ENCODE measurements at regions of chrX and their contacts with region 1.

Region 1: DNA sequence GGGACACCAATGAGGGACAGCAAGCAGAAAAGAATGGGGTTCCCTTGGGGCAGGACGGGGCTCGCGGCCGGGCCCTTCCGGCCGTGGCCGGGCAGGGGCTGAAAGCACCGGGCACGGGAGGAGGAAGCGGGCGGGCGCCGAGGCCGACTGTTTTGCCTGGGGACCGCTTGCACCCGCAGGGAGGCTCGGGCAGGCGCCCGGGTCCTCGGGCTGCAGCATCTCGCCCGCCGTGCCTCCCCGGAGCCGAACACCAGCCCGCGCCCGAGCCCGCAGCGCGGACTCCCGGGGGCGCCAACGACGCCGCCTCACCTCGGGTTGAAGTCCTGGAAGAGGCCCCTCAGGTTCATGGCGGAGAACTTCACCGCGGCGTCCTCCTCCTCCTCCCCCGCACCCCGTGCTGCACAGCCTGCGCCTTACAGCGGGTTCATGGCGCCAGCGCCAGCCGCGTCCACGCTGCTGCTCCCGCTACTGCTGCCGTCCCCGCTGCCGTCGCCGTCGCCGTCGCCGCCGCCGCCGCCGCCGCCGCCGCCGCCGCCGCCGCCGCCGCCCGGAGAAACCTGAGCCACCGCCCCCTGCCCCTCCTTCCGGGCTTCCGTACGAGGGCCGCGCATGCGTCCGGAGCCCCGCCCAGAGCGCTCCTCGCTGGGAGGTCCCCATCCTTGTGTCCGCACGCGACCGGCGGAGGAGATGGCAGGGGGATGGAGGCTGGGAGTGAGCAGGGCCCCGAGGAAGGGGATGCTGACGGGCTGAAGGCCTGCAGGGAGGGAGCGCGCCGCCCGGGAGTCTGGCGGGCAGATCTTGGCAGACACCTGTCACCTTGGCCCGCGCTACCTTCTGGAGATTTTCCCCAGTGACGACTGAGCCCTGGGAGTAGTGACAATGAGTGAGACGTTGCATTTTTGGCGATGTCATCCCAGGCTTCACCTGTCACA is at the start of gene TMEM185A:
- DNase-seq: peak; percentile 48 to 79 (median 71)
- ATAC-seq: peak; percentile 92
- H3K4me3 ChIP-seq: peak within 1 kb of the TSS; percentile 68
- H3K4me3 Mint-ChIP-seq: peak within 1 kb of the TSS; percentile 84 to 98 (median 92)
- H3K27ac ChIP-seq: peak within 1 kb of the TSS; percentile 72
- H3K27ac Mint-ChIP-seq: peak within 1 kb of the TSS; percentile 78 to 94 (median 83)
- H3K4me1 ChIP-seq: peaks cover 12% of the 10 kb centered on the region in 2 donors
- H3K4me1 Mint-ChIP-seq: peaks cover 29 to 43% (median 39%) of the 10 kb centered on the region in 7 donors
- H3K27me3 ChIP-seq: no peaks in the 10 kb centered on the region
- H3K27me3 Mint-ChIP-seq: peaks cover 0 to 9% (median 0%) of the 10 kb centered on the region in 5 donors
- total RNA-seq, gene TMEM185A: 11.9 to 23.4 (median 19.9) TPM

Region 2: GRCh38 chrX:147911192-147912022 is 1720.1 kb before region 1 on chrX and contains the start of gene FMR1:
- CTCF ChIA-PET with region 1: no interaction called
- POLR2A ChIA-PET with region 1: no interaction called
- intact Hi-C with region 1: loop called in 1 of 2 experiments (anchors 10 kb)
- DNase-seq: peak; percentile 83 to 95 (median 93)
- ATAC-seq: peak; percentile 96
- H3K4me3 ChIP-seq: peak within 1 kb of the TSS; percentile 71
- H3K4me3 Mint-ChIP-seq: peak within 1 kb of the TSS; percentile 87 to 98 (median 96)
- H3K27ac ChIP-seq: peak within 1 kb of the TSS; percentile 93
- H3K27ac Mint-ChIP-seq: peak within 1 kb of the TSS; percentile 87 to 97 (median 94)
- H3K4me1 ChIP-seq: peaks cover 0 to 35% of the 10 kb centered on the region in 2 donors
- H3K4me1 Mint-ChIP-seq: peaks cover 7 to 43% (median 34%) of the 10 kb centered on the region in 7 donors
- H3K27me3 ChIP-seq: no peaks in the 10 kb centered on the region
- H3K27me3 Mint-ChIP-seq: peaks cover 0 to 2% (median 0%) of the 10 kb centered on the region in 5 donors
- total RNA-seq, gene FMR1: 50.6 to 84.2 (median 76.8) TPM

Region 3: GRCh38 chrX:149453030-149453429 is 178.5 kb before region 1 on chrX:
- CTCF ChIA-PET with region 1: no interaction called
- POLR2A ChIA-PET with region 1: no interaction called
- intact Hi-C with region 1: no loop called
- DNase-seq: no peak
- ATAC-seq: no peak
- H3K4me3 ChIP-seq: no peak overlapping the region
- H3K4me3 Mint-ChIP-seq: no peak overlapping the region
- H3K27ac ChIP-seq: no peak overlapping the region
- H3K27ac Mint-ChIP-seq: no peak overlapping the region
- H3K4me1 ChIP-seq: no peaks in the 10 kb centered on the region
- H3K4me1 Mint-ChIP-seq: no peaks in the 10 kb centered on the region
- H3K27me3 ChIP-seq: no peaks in the 10 kb centered on the region
- H3K27me3 Mint-ChIP-seq: peaks cover 0 to 4% (median 3%) of the 10 kb centered on the region in 5 donors

Region 4: DNA sequence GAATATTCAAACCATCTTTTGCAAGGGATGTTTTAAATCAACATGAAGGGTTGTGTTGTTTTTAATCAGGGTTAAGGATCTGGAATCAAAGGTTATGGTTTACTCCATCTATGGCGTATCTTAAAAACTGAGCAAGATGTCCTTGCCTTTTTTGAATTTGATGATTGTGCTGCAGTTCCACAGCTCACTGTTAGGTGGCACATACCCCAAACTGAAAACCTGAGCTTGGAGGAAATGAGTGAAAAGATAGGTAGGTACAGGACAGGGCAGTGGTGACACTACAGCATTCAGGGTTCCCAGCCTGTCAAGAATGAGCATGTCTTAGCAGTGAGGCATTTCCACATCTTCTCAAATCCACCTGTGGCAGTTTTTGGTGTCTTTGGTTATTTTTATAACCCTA is 103.8 kb before region 1 on chrX:
- CTCF ChIA-PET with region 1: no interaction called
- POLR2A ChIA-PET with region 1: no interaction called
- intact Hi-C with region 1: loop called in 1 of 2 experiments (anchors 5 kb)
- DNase-seq: peak in 7 of 9 donors; percentile 27 to 62 (median 36)
- ATAC-seq: peak; percentile 43
- H3K4me3 ChIP-seq: no peak overlapping the region
- H3K4me3 Mint-ChIP-seq: peak overlapping the region in 3 of 10 donors; percentile 4 to 33 (median 10)
- H3K27ac ChIP-seq: no peak overlapping the region
- H3K27ac Mint-ChIP-seq: peak overlapping the region; percentile 35 to 88 (median 77)
- H3K4me1 ChIP-seq: peaks cover 18 to 26% of the 10 kb centered on the region in 2 donors
- H3K4me1 Mint-ChIP-seq: peaks cover 0 to 31% (median 14%) of the 10 kb centered on the region in 7 donors
- H3K27me3 ChIP-seq: no peaks in the 10 kb centered on the region
- H3K27me3 Mint-ChIP-seq: no peaks in the 10 kb centered on the region

Region 5: DNA sequence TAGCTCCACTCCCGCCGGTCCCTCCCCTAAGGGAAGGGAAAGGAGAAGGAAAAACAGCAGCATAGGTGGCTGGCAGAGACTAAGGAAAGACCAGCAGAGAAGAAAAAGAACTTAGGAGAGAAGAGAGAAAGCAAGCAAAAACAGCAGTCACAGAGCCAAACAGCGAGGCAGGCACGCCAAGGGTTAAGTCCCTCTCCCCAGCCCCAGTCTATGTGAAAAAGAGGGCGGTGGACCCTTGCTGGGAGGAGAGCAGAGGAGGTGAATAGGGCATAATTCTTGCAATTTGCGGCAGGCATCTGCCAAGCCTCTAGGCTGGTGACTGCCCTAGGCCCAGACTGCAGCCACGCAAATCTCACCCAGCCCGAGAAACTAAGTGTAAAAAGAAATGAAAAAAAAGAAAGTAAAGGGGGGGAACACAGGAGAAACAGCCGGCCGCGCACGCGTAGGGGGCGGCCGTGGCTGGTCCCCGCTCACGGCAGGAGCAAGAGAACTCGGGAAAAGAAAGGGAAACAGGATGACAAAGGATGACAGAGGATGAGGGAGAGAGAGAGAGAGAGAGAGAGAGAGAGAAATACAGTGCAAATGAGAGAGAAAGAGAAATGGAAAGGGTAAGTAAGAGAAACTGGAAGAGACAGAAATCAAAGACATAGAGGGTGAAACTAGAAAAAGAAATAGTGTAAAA is 198.8 kb after region 1 on chrX:
- CTCF ChIA-PET with region 1: no interaction called
- POLR2A ChIA-PET with region 1: no interaction called
- intact Hi-C with region 1: loop called in 1 of 2 experiments (anchors 10 kb)
- DNase-seq: peak in 6 of 9 donors; percentile 5 to 23 (median 12)
- ATAC-seq: peak; percentile 78
- H3K4me3 ChIP-seq: peak overlapping the region; percentile 32
- H3K4me3 Mint-ChIP-seq: peak overlapping the region; percentile 64 to 89 (median 84)
- H3K27ac ChIP-seq: peak overlapping the region; percentile 67
- H3K27ac Mint-ChIP-seq: peak overlapping the region; percentile 17 to 97 (median 86)
- H3K4me1 ChIP-seq: peaks cover 5 to 7% of the 10 kb centered on the region in 2 donors
- H3K4me1 Mint-ChIP-seq: peaks cover 14 to 42% (median 24%) of the 10 kb centered on the region in 7 donors
- H3K27me3 ChIP-seq: no peaks in the 10 kb centered on the region
- H3K27me3 Mint-ChIP-seq: peaks cover 0 to 4% (median 0%) of the 10 kb centered on the region in 5 donors

Region 6: DNA sequence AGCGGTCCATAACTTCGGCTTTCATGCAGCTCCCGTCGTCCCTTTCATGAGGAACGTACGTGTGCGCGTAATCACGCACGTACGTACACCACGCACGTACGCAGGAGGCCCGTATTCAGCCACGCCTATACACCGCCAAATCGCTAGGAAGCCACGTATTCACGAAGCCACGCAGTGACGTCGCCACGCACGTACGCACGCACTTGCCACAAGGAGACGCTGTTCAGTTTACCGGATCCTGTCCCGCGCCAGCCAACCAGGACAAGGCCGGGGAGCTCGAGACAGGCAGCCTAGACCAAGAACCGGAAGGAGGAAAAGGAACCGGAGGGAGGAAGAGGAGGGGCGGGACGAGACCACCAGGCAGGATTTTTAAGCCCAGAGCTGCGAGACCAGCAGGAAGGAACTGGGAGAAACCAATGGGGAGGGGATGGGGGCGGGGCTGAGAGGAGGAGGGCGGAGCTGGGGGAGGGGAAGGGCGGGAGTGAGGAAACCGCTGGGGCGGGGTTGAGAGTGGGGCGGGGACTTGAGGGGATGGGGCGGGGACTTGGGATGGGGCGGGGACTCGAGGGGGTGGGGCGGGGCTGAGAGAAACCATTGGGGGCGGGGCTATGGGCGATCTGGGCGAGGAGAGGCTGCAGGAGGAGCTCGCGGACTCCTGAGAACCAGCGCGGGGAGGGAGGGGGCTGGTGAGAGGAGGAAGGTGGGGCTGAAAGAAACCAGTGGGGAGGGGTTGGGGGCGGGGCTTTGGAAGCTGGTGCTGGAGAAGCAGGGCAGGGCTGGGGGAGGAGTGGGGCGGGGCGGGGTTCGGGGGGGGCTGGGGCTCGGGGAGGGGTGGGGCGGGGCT is 307.1 kb after region 1 on chrX and contains the start of gene EOLA2:
- CTCF ChIA-PET with region 1: no interaction called
- POLR2A ChIA-PET with region 1: no interaction called
- intact Hi-C with region 1: loop called in 1 of 2 experiments (anchors 10 kb)
- DNase-seq: peak; percentile 67 to 96 (median 92)
- ATAC-seq: peak; percentile 67
- H3K4me3 ChIP-seq: peak within 1 kb of the TSS; percentile 57
- H3K4me3 Mint-ChIP-seq: peak within 1 kb of the TSS; percentile 81 to 98 (median 92)
- H3K27ac ChIP-seq: peak within 1 kb of the TSS; percentile 90
- H3K27ac Mint-ChIP-seq: peak within 1 kb of the TSS; percentile 92 to 99 (median 99)
- H3K4me1 ChIP-seq: peaks cover 5% of the 10 kb centered on the region in 2 donors
- H3K4me1 Mint-ChIP-seq: peaks cover 0 to 7% (median 0%) of the 10 kb centered on the region in 7 donors
- H3K27me3 ChIP-seq: no peaks in the 10 kb centered on the region
- H3K27me3 Mint-ChIP-seq: no peaks in the 10 kb centered on the region
- total RNA-seq, gene EOLA2: 43.1 to 59.1 (median 45.4) TPM

Measured in naive thymus-derived CD4-positive, alpha-beta T cell (primary cell).